Mammary epithelial cell (primary cell): ENCODE measurements at regions of chrX and their contacts with region 1.

Region 1: GRCh38 chrX:139559383-139560042 is 29.0 kb downstream of the F9 start:
- DNase-seq: peak; percentile 48
- H3K4me3 ChIP-seq: no peak overlapping the region
- H3K27ac ChIP-seq: no peak overlapping the region
- H3K4me1 ChIP-seq: no peaks in the 10 kb centered on the region
- H3K27me3 ChIP-seq: no peaks in the 10 kb centered on the region
- CTCF ChIP-seq: peak; percentile 43 to 65

Region 2: DNA sequence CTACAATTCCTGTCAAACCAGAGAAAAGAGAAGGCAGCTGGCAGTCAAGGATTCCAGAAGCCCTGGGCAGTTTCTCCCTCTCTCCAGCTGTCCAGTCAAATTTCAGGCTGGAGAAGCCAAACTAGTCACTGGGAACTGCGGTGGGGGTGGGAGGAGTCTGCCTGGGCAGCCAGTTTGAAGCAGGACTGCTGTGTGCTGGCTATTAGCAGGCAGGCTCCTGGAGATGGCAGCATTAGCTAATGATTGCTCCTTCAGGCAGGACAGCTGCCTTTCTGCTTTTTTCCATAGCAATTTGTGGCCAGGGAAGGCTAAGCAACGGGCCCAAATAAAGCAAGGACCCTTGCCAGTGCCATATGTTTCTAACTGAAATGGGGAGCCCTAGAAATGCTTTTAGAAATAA is 803.3 kb before region 1 on chrX:
- CTCF ChIA-PET with region 1: no interaction called
- dilution Hi-C with region 1: no loop called
- in situ Hi-C with region 1: no loop called
- intact Hi-C with region 1: loop called (anchors 5 kb)
- DNase-seq: peak; percentile 37
- H3K4me3 ChIP-seq: no peak overlapping the region
- H3K27ac ChIP-seq: no peak overlapping the region
- H3K4me1 ChIP-seq: no peaks in the 10 kb centered on the region
- H3K27me3 ChIP-seq: no peaks in the 10 kb centered on the region
- CTCF ChIP-seq: peak; percentile 21 to 55

Region 3: GRCh38 chrX:138775517-138775916 is 784.0 kb before region 1 on chrX:
- CTCF ChIA-PET with region 1: no interaction called
- dilution Hi-C with region 1: no loop called
- in situ Hi-C with region 1: loop called in 1 of 2 experiments (anchors 10 kb)
- intact Hi-C with region 1: no loop called
- DNase-seq: peak; percentile 25
- H3K4me3 ChIP-seq: no peak overlapping the region
- H3K27ac ChIP-seq: no peak overlapping the region
- H3K4me1 ChIP-seq: no peaks in the 10 kb centered on the region
- H3K27me3 ChIP-seq: no peaks in the 10 kb centered on the region
- CTCF ChIP-seq: peak; percentile 37 to 44

Region 4: DNA sequence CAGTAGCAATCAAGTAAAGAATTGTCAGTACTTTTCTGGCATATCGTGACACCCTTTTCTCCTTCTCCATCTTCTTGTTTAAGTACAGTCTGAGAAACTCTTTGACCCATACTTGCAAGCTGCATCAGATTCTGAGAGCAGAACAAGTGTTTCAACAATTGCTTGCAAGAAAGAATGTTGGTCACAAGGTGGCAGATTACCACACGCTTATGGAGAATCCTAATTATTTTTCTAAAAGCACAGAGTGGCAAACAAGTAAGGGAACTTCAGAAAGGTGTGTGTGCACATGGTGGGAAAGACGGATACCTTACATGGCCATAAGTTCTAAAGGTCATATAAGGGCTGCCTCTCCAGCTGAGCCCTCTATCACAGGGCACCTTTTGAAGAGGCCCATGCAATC is 711.6 kb before region 1 on chrX:
- CTCF ChIA-PET with region 1: no interaction called
- dilution Hi-C with region 1: no loop called
- in situ Hi-C with region 1: no loop called
- intact Hi-C with region 1: loop called (anchors 1 kb)
- DNase-seq: peak; percentile 9
- H3K4me3 ChIP-seq: no peak overlapping the region
- H3K27ac ChIP-seq: no peak overlapping the region
- H3K4me1 ChIP-seq: no peaks in the 10 kb centered on the region
- H3K27me3 ChIP-seq: no peaks in the 10 kb centered on the region
- CTCF ChIP-seq: peak; percentile 17 to 49

Region 5: DNA sequence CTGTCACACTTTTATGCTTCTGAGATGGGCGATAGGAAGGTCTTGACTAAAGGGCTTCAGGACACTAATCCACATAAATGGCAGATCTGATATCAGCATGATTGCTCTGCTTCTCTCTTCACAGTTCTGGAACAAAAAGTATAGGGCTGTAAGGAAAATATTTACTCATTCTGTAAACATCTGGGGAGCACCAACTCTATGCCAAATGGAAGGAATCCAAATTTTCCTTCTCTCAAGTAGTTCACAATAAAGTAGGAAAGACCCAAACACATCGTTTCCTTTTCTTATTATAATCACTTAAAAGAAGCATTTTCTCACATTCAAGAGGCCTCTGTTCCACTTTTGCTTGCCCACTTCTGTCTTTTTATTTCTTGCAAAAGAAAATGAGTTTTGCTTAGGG is 74.9 kb before region 1 on chrX:
- CTCF ChIA-PET with region 1: no interaction called
- dilution Hi-C with region 1: no loop called
- in situ Hi-C with region 1: no loop called
- intact Hi-C with region 1: no loop called
- DNase-seq: no peak
- H3K4me3 ChIP-seq: no peak overlapping the region
- H3K27ac ChIP-seq: no peak overlapping the region
- H3K4me1 ChIP-seq: no peaks in the 10 kb centered on the region
- H3K27me3 ChIP-seq: no peaks in the 10 kb centered on the region
- CTCF ChIP-seq: no peak

Region 6: GRCh38 chrX:139759637-139760036 is 200.1 kb after region 1 on chrX:
- CTCF ChIA-PET with region 1: no interaction called
- dilution Hi-C with region 1: no loop called
- in situ Hi-C with region 1: no loop called
- intact Hi-C with region 1: loop called (anchors 2 kb)
- DNase-seq: peak; percentile 15
- H3K4me3 ChIP-seq: no peak overlapping the region
- H3K27ac ChIP-seq: no peak overlapping the region
- H3K4me1 ChIP-seq: peaks cover 7% of the 10 kb centered on the region
- H3K27me3 ChIP-seq: no peaks in the 10 kb centered on the region
- CTCF ChIP-seq: peak; percentile 37 to 48

Region 7: DNA sequence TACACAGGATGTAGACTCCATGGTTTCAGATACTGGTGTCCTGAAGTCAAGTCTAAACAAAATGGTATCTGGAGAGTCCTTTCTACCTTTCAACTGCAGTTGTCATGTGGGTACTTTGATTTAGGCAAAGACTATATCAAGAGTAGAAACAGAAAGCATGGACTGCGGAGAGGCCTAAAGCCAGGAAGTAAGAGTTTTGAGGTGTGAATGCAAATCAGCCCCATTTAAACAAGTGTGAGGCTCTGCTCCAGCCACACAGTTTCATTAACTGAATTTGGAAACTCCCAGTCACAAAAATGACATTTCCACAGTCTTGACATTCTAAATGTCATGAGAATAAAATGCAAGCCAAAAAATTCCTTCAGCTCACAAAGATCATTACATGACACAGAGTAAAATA is 235.7 kb after region 1 on chrX:
- CTCF ChIA-PET with region 1: no interaction called
- dilution Hi-C with region 1: no loop called
- in situ Hi-C with region 1: no loop called
- intact Hi-C with region 1: no loop called
- DNase-seq: no peak
- H3K4me3 ChIP-seq: no peak overlapping the region
- H3K27ac ChIP-seq: no peak overlapping the region
- H3K4me1 ChIP-seq: no peaks in the 10 kb centered on the region
- H3K27me3 ChIP-seq: no peaks in the 10 kb centered on the region
- CTCF ChIP-seq: no peak

Region 8: DNA sequence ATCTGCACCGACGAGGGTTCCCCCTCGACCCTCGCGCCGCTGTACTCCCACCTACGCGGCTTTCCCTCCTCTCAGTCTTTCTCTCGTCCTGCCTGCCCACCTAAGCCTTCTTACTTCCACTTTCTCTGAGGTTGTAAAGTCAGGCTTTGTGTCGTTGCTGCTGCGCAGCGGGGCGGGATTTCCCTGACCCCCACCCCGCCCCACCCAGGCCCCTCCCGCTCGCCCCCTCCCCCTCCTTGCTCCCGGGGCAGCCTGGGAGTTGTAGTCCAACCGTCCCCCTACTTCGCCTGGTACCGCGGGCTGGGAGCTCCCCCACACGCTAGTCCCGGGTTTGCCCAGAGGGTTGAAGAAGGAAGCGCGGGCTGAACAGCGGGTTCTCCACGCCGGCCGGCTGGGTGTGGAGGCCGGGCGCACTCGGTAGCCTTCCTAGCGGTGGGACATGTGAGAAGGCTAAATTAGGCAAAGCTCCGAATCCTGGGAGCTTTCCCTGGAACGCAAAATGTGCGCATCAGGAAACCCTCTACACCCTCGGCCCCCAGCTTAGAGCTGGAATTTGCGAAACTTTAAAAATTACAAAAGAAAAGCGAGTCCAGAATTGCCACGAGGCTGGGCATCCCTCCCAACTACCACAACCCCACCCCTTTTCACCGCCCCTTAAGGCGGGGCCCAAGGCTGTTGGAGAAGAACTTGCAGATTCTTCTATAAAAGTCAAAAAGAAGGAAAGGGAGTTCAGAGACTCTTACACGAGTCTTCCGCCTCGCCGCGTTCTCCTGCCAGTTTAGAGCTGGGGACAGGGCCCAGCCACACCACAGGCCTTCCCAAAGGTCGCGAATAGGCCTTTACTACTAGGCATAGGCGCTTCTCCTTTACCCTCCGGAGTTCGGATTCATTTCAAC is 373.6 kb after region 1 on chrX and contains the start of gene ATP11C:
- CTCF ChIA-PET with region 1: no interaction called
- dilution Hi-C with region 1: no loop called
- in situ Hi-C with region 1: no loop called
- intact Hi-C with region 1: loop called (anchors 5 kb)
- DNase-seq: peak; percentile 78
- H3K4me3 ChIP-seq: peak within 1 kb of the TSS; percentile 57 to 73 (median 58)
- H3K27ac ChIP-seq: peak within 1 kb of the TSS; percentile 62
- H3K4me1 ChIP-seq: no peaks in the 10 kb centered on the region
- H3K27me3 ChIP-seq: no peaks in the 10 kb centered on the region
- CTCF ChIP-seq: no peak
- total RNA-seq, gene ATP11C: 10.8 to 25.0 TPM